Right cardiac atrium (tissue), 5 donors: ENCODE measurements at regions of chr22 and their contacts with region 1.

Region 1: GRCh38 chr22:35914665-35915476 is 113.8 kb downstream of the RBFOX2 start:
- DNase-seq: peak; percentile 36 to 61 (median 57)
- ATAC-seq: peak; percentile 91 to 94
- H3K4me3 ChIP-seq: peak overlapping the region; percentile 52
- H3K27ac ChIP-seq: peak overlapping the region; percentile 98
- H3K4me1 ChIP-seq: peaks cover 7% of the 10 kb centered on the region
- H3K27me3 ChIP-seq: no peaks in the 10 kb centered on the region

Region 2: DNA sequence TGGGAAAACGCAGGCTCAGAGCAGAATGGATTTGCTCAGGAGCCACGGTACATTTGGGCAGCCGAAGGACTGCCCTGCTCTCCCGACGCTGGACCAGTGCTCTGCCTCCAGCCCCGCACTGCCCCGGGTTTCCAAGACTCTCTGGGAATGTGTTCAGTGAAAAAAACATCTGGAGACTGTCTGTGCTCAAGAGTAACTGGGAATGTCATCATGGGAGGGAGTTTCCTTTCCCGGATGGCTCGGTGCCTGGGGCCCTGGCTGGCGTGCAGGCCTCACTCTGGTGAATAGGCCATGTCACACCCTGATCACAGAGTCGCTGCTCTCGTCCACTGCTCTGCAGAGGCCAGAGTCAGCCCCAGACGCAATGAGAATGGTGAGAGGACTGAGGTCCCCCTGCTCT is 276.5 kb before region 1 on chr22:
- intact Hi-C with region 1: loop called in 2 of 4 experiments (anchors 5 to 10 kb)
- DNase-seq: peak; percentile 92 to 97 (median 97)
- ATAC-seq: peak; percentile 96 to 97
- H3K4me3 ChIP-seq: no peak overlapping the region
- H3K27ac ChIP-seq: peak overlapping the region; percentile 89
- H3K4me1 ChIP-seq: peaks cover 22% of the 10 kb centered on the region
- H3K27me3 ChIP-seq: no peaks in the 10 kb centered on the region

Region 3: DNA sequence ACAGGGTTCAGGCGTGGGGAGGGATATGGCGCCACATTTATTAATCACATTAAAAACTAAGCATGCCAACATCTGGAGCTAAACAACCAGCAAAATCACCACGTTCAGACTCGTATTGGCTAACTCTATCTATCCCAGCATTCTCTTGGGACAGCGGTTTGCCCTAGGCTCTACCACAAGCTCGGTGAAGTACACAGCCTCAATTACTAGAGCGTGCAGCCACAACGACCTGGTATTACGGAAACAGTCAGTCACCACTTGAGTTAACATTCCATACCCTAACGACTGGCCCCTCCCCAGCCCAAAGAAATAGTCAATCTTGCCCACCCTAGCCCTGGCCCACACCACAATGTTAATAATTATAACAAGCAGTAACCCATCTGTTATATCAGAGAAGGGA is 165.1 kb before region 1 on chr22:
- intact Hi-C with region 1: loop called in 1 of 4 experiments (anchors 10 kb)
- DNase-seq: no peak
- ATAC-seq: no peak
- H3K4me3 ChIP-seq: no peak overlapping the region
- H3K27ac ChIP-seq: no peak overlapping the region
- H3K4me1 ChIP-seq: peaks cover 4% of the 10 kb centered on the region
- H3K27me3 ChIP-seq: no peaks in the 10 kb centered on the region

Region 4: DNA sequence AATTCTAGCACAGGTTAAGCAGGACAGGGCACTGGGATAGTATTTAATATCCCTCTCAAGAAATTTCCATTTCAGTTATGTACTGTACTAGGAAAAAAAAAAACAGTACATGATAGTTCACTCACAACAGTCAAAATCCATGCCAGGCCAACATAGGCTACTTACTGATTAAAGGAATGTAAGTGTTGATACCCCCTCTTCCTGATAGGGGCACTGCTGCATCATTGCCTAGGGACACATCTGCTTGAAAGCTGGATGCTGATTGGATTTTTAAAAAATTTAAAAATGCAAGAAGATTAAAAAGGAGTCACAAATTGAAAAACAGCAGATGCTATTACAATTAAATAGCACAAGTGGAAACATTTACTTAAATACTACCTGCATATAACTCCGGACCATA is 153.8 kb before region 1 on chr22:
- intact Hi-C with region 1: loop called in 2 of 4 experiments (anchors 10 kb)
- DNase-seq: no peak
- ATAC-seq: peak; percentile 46 to 59
- H3K4me3 ChIP-seq: no peak overlapping the region
- H3K27ac ChIP-seq: no peak overlapping the region
- H3K4me1 ChIP-seq: peaks cover 2% of the 10 kb centered on the region
- H3K27me3 ChIP-seq: no peaks in the 10 kb centered on the region

Region 5: GRCh38 chr22:35840302-35840739 is 74.5 kb before region 1 on chr22:
- intact Hi-C with region 1: loop called in 3 of 4 experiments (anchors 5 to 10 kb)
- DNase-seq: peak; percentile 88 to 92 (median 92)
- ATAC-seq: peak; percentile 91 to 95
- H3K4me3 ChIP-seq: peak overlapping the region; percentile 78
- H3K27ac ChIP-seq: peak overlapping the region; percentile 79
- H3K4me1 ChIP-seq: peaks cover 3% of the 10 kb centered on the region
- H3K27me3 ChIP-seq: no peaks in the 10 kb centered on the region

Region 6: GRCh38 chr22:35892192-35892591 is 22.7 kb before region 1 on chr22:
- intact Hi-C with region 1: loop called in 1 of 4 experiments (anchors 2 kb)
- DNase-seq: no peak
- ATAC-seq: peak in 1 of 2 donors; percentile 43
- H3K4me3 ChIP-seq: peak overlapping the region; percentile 68
- H3K27ac ChIP-seq: peak overlapping the region; percentile 30
- H3K4me1 ChIP-seq: peaks cover 10% of the 10 kb centered on the region
- H3K27me3 ChIP-seq: no peaks in the 10 kb centered on the region

Region 7: GRCh38 chr22:36470162-36470993 is 555.5 kb after region 1 on chr22:
- intact Hi-C with region 1: no loop called
- DNase-seq: peak; percentile 79 to 89 (median 88)
- ATAC-seq: peak; percentile 70 to 76
- H3K4me3 ChIP-seq: no peak overlapping the region
- H3K27ac ChIP-seq: peak overlapping the region; percentile 4
- H3K4me1 ChIP-seq: peaks cover 2% of the 10 kb centered on the region
- H3K27me3 ChIP-seq: no peaks in the 10 kb centered on the region